HCT116 (cell line): ENCODE measurements at regions of chr15 and their contacts with region 1.

Region 1: DNA sequence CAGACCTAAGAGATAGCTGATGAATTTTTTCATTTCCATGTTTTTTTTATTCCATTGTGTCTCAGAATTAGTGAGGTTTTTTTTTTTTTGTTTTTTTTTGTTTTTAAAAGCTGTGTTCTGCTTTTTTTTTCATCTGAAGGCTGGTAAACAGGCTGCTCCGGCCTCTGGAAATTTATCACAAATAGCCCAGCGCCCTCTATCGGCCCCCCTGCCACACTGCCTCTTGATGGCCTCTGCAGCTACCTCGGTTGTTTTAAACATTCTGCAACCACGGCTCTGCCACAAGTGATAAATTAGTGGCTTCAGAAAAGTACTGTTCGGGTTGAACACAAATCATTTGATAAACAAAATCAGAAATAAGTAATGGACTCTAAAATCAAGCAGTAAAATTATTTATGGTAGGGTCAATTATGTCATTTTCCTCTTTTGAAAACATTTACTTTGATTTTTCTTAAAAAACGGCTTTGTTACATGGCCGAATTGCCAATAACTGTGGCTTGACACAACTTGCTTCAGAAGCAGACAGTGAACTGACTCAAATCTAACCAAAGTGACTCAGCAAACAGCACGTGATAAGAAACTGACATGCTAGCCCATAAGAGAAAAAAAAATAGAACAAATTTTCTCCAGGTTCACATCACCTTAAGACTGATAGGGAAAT is 87.8 kb downstream of the RSL24D1 start:
- DNase-seq: peak; percentile 36
- ATAC-seq: peak; percentile 84
- H3K4me3 ChIP-seq: no peak overlapping the region
- H3K27ac ChIP-seq: no peak overlapping the region
- H3K4me1 ChIP-seq: no peaks in the 10 kb centered on the region
- H3K27me3 ChIP-seq: peaks cover 9% of the 10 kb centered on the region; the same call in 1 of the 2 replicates
- CTCF ChIP-seq: peak; percentile 28 to 87 (median 87); a peak in 4 of 6 replicates
- POLR2A ChIP-seq: no peak
- RAD21 ChIP-seq: peak; percentile 55

Region 2: DNA sequence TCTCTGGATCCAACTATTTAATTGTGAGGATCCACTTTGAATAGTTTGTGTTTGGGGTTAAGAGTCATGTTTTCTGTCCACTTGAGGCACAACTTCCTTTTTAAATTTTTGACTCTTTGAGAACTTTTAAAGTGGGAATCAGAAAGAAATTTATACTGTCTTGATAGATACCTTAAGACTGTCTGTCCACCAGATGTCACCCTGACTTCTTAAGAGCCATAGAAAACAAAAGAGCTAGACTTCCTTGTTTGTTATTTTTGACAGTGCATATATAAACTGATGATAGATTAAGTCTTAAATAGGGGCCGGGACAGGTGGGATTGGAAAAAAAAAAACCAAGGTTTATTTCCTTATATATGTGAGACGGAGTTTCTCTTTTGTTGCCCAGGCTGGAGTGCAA is 1297.5 kb before region 1 on chr15:
- CTCF ChIA-PET with region 1: no interaction called
- POLR2A ChIA-PET with region 1: no interaction called
- RAD21 ChIA-PET with region 1: no interaction called
- intact Hi-C with region 1: loop called (anchors 5 kb)
- DNase-seq: peak; percentile 7
- ATAC-seq: no peak
- H3K4me3 ChIP-seq: no peak overlapping the region
- H3K27ac ChIP-seq: no peak overlapping the region
- H3K4me1 ChIP-seq: no peaks in the 10 kb centered on the region
- H3K27me3 ChIP-seq: no peaks in the 10 kb centered on the region
- CTCF ChIP-seq: peak in 2 of 3 experiments; percentile 7 to 28; a peak in 3 of 6 replicates
- POLR2A ChIP-seq: no peak
- RAD21 ChIP-seq: peak; percentile 29; the same call in 1 of the 2 replicates

Region 3: GRCh38 chr15:53962332-53963241 is 1146.4 kb before region 1 on chr15:
- CTCF ChIA-PET with region 1: no interaction called
- POLR2A ChIA-PET with region 1: no interaction called
- RAD21 ChIA-PET with region 1: no interaction called
- intact Hi-C with region 1: loop called (anchors 5 kb)
- DNase-seq: no peak
- ATAC-seq: no peak
- H3K4me3 ChIP-seq: no peak overlapping the region
- H3K27ac ChIP-seq: no peak overlapping the region
- H3K4me1 ChIP-seq: no peaks in the 10 kb centered on the region
- H3K27me3 ChIP-seq: no peaks in the 10 kb centered on the region
- CTCF ChIP-seq: peak in 2 of 3 experiments; percentile 18 to 42; a peak in 3 of 6 replicates
- POLR2A ChIP-seq: no peak
- RAD21 ChIP-seq: peak; percentile 19; the same call in 1 of the 2 replicates

Region 4: GRCh38 chr15:54638666-54639065 is 470.3 kb before region 1 on chr15:
- CTCF ChIA-PET with region 1: no interaction called
- POLR2A ChIA-PET with region 1: no interaction called
- RAD21 ChIA-PET with region 1: no interaction called
- intact Hi-C with region 1: no loop called
- DNase-seq: no peak
- ATAC-seq: no peak
- H3K4me3 ChIP-seq: no peak overlapping the region
- H3K27ac ChIP-seq: no peak overlapping the region
- H3K4me1 ChIP-seq: no peaks in the 10 kb centered on the region
- H3K27me3 ChIP-seq: no peaks in the 10 kb centered on the region
- CTCF ChIP-seq: no peak
- POLR2A ChIP-seq: no peak
- RAD21 ChIP-seq: no peak

Region 5: GRCh38 chr15:54820811-54821210 is 288.2 kb before region 1 on chr15:
- CTCF ChIA-PET with region 1: no interaction called
- POLR2A ChIA-PET with region 1: no interaction called
- RAD21 ChIA-PET with region 1: no interaction called
- intact Hi-C with region 1: no loop called
- DNase-seq: no peak
- ATAC-seq: no peak
- H3K4me3 ChIP-seq: no peak overlapping the region
- H3K27ac ChIP-seq: no peak overlapping the region
- H3K4me1 ChIP-seq: no peaks in the 10 kb centered on the region
- H3K27me3 ChIP-seq: no peaks in the 10 kb centered on the region
- CTCF ChIP-seq: no peak
- POLR2A ChIP-seq: no peak
- RAD21 ChIP-seq: no peak

Region 6: DNA sequence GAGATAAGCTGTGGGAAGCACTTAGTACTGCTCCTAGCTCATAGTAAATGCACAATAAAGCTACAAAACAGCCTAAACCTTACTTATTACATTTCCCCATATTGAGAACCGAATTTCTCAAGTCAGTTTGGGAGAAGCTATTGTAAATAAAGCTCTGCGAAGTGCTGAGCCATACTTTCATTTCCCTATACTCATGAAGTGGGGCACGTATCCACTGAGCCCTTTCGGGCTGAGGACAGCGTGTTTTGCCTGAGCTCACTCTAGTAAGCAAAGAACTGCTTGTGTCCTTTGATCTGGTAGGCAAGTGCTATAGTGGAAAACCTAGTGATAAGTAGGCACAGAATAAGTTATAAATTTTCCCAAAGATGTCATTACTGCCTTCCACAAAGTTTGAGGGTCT is 77.3 kb before region 1 on chr15:
- CTCF ChIA-PET with region 1: no interaction called
- POLR2A ChIA-PET with region 1: no interaction called
- RAD21 ChIA-PET with region 1: no interaction called
- intact Hi-C with region 1: no loop called
- DNase-seq: no peak
- ATAC-seq: no peak
- H3K4me3 ChIP-seq: no peak overlapping the region
- H3K27ac ChIP-seq: no peak overlapping the region
- H3K4me1 ChIP-seq: no peaks in the 10 kb centered on the region
- H3K27me3 ChIP-seq: no peaks in the 10 kb centered on the region
- CTCF ChIP-seq: no peak
- POLR2A ChIP-seq: no peak
- RAD21 ChIP-seq: no peak